CD8-positive, alpha-beta T cell (primary cell): ENCODE measurements at regions of chr1 and their contacts with region 1.

Region 1: GRCh38 chr1:145978854-145979759 is 14.6 kb downstream of the POLR3GL start:
- DNase-seq: peak; percentile 45 to 96 (median 76)
- ATAC-seq: peak; percentile 72
- H3K4me3 ChIP-seq: peak overlapping the region; percentile 17 to 34
- H3K4me3 Mint-ChIP-seq: no peak overlapping the region
- H3K27ac ChIP-seq: peak overlapping the region; percentile 57 to 95
- H3K27ac Mint-ChIP-seq: no peak overlapping the region
- H3K4me1 ChIP-seq: peaks cover 70% of the 10 kb centered on the region
- H3K4me1 Mint-ChIP-seq: peaks cover 23% of the 10 kb centered on the region
- H3K27me3 ChIP-seq: no peaks in the 10 kb centered on the region
- H3K27me3 Mint-ChIP-seq: no peaks in the 10 kb centered on the region
- CTCF ChIP-seq: peak; percentile 27

Region 2: DNA sequence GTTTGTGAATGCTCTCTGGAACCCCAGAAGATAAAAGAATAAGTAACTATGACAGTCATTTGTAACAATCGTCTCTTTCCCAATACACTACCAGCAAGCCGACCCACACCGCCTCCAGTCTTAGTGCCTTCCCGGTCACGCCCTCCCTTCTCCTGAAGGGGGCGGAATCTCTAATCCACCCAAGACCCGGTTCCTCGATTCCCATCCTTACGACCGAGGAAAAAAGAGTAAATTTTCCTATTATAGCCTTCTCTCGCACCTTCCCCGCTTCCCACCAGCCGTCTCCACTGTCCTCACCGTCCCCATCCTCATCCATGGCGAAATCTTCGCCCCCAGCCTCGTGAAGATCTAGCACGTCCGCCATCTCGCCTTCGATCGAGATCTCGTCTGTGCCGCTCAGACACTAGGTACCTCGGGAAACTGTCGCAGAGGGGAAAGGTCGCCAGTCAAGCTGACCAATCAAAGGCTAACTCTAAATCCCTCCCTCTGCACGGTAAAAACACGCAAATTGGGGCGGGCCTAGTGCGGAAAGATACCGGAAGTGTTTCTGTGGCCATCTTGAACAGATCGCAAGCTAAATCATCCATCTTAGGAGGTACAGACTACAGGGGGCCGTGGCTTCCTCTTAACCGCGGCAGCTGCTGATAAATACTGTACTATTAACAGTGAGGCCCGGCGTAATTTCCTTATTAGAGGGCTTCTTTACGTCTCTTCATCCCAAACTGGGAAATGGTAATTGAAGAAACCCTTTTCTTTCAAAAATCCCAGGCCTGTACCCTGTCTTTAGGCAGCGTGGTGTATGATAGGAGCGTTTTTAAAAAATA is 51.8 kb before region 1 on chr1 and contains the start of gene RBM8A:
- CTCF ChIA-PET with region 1: interaction called, 8 read pairs
- POLR2A ChIA-PET with region 1: interaction called, 10 read pairs
- intact Hi-C with region 1: no loop called
- DNase-seq: peak; percentile 85 to 99 (median 94)
- ATAC-seq: peak; percentile 96
- H3K4me3 ChIP-seq: peak within 1 kb of the TSS; percentile 86 to 91
- H3K4me3 Mint-ChIP-seq: no peak within 1 kb of the TSS
- H3K27ac ChIP-seq: peak within 1 kb of the TSS; percentile 89 to 95
- H3K27ac Mint-ChIP-seq: peak within 1 kb of the TSS; percentile 91
- H3K4me1 ChIP-seq: peaks cover 22% of the 10 kb centered on the region
- H3K4me1 Mint-ChIP-seq: peaks cover 20% of the 10 kb centered on the region
- H3K27me3 ChIP-seq: no peaks in the 10 kb centered on the region
- H3K27me3 Mint-ChIP-seq: no peaks in the 10 kb centered on the region
- CTCF ChIP-seq: peak; percentile 60
- total RNA-seq, gene RBM8A: 180 to 187 TPM

Region 3: DNA sequence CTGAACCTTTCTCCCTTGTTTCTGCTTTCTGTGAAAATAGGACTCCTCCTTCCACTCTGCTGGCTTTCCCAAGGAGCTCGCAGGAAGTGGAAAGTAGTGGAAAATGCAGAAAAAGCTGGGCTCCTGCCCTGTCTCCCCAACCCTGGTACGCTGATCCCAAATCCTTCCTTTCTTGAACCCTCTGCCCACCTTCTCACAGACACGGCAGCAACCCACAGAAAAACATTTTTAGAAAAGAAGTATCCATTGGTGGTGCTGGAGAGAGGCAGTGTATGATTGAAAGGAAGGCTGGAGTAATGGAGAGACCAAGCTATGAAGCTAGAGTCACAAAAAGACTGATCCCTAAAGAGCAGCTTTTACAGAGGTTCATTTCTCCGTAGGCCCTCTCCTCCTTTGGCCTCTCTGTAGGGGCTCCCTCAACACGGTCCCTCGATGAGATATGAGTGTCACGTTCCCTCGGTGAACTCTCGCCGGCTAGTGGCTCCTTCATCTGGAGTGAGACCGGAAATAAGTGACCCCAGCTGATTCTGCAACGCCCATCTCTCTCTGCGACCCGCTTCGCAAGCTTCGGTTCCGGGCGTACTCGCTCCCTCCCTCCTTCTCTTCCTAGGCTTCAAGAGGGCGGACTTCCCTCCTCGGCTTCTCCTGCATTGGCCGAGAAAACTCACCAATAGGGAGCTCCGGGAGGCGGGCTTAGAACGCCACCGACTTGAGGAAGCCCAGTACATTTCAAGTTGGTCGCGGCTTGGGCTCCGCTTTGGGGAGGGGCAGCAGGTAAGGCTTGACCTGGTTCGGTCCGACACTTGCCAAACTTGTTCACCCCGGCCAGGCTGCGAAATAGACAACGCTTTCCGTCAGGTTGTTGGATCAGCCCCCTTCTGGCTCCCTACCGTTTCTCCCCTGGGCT is 14.9 kb before region 1 on chr1 and contains the starts of genes ANKRD34A and POLR3GL:
- CTCF ChIA-PET with region 1: interaction called, 86 read pairs
- POLR2A ChIA-PET with region 1: interaction called, 24 read pairs
- intact Hi-C with region 1: loop called (anchors 1 to 2 kb)
- DNase-seq: peak; percentile 77 to 95 (median 91)
- ATAC-seq: peak; percentile 88
- H3K4me3 ChIP-seq: peak within 1 kb of the TSS; percentile 87 to 92
- H3K4me3 Mint-ChIP-seq: peak within 1 kb of the TSS; percentile 98
- H3K27ac ChIP-seq: peak within 1 kb of the TSS; percentile 71 to 78
- H3K27ac Mint-ChIP-seq: peak within 1 kb of the TSS; percentile 98
- H3K4me1 ChIP-seq: peaks cover 32% of the 10 kb centered on the region
- H3K4me1 Mint-ChIP-seq: peaks cover 58% of the 10 kb centered on the region
- H3K27me3 ChIP-seq: no peaks in the 10 kb centered on the region
- H3K27me3 Mint-ChIP-seq: no peaks in the 10 kb centered on the region
- CTCF ChIP-seq: no peak
- total RNA-seq, gene ANKRD34A: 0.42 to 0.62 TPM
- total RNA-seq, gene POLR3GL: 12.9 to 14.4 TPM

Region 4: GRCh38 chr1:146007506-146008133 is 28.5 kb after region 1 on chr1:
- CTCF ChIA-PET with region 1: interaction called, 386 read pairs
- POLR2A ChIA-PET with region 1: interaction called, 27 read pairs
- intact Hi-C with region 1: loop called (anchors 1 kb)
- DNase-seq: peak in 1 of 9 experiments; percentile 39
- ATAC-seq: no peak
- H3K4me3 ChIP-seq: no peak overlapping the region
- H3K4me3 Mint-ChIP-seq: peak overlapping the region; percentile 82
- H3K27ac ChIP-seq: peak overlapping the region; percentile 46 to 59
- H3K27ac Mint-ChIP-seq: peak overlapping the region; percentile 92
- H3K4me1 ChIP-seq: peaks cover 27% of the 10 kb centered on the region
- H3K4me1 Mint-ChIP-seq: peaks cover 34% of the 10 kb centered on the region
- H3K27me3 ChIP-seq: no peaks in the 10 kb centered on the region
- H3K27me3 Mint-ChIP-seq: no peaks in the 10 kb centered on the region
- CTCF ChIP-seq: no peak

Region 5: GRCh38 chr1:146019231-146020057 is 40.3 kb after region 1 on chr1:
- CTCF ChIA-PET with region 1: interaction called, 386 read pairs
- POLR2A ChIA-PET with region 1: interaction called, 4 read pairs
- intact Hi-C with region 1: no loop called
- DNase-seq: peak in 1 of 9 experiments; percentile 45
- ATAC-seq: peak; percentile 20
- H3K4me3 ChIP-seq: no peak overlapping the region
- H3K4me3 Mint-ChIP-seq: peak overlapping the region; percentile 37
- H3K27ac ChIP-seq: no peak overlapping the region
- H3K27ac Mint-ChIP-seq: no peak overlapping the region
- H3K4me1 ChIP-seq: no peaks in the 10 kb centered on the region
- H3K4me1 Mint-ChIP-seq: peaks cover 9% of the 10 kb centered on the region
- H3K27me3 ChIP-seq: peaks cover 10 to 14% of the 10 kb centered on the region in 2 experiments
- H3K27me3 Mint-ChIP-seq: peaks cover 38% of the 10 kb centered on the region
- CTCF ChIP-seq: no peak

Region 6: DNA sequence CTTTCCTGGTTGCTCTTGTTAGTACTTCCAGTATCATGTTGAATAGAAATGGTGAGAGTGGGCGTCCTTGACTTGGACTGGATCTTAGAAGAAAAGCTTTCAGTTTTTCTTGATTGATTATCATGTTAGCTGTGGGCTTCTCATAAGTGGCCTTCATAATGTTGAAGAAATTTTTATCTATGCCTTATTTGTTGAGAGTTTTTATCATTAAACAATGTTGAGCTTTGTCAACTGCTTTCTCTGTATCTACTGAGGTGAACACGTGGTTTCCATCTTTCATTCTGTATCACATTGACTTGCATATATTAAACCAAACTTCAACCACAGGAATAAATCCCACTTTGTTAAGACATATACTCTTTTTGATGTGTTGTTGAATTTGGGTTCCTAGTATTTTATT is 1163.8 kb after region 1 on chr1:
- CTCF ChIA-PET with region 1: no interaction called
- POLR2A ChIA-PET with region 1: no interaction called
- intact Hi-C with region 1: no loop called
- DNase-seq: no peak
- ATAC-seq: no peak
- H3K4me3 ChIP-seq: no peak overlapping the region
- H3K4me3 Mint-ChIP-seq: no peak overlapping the region
- H3K27ac ChIP-seq: no peak overlapping the region
- H3K27ac Mint-ChIP-seq: no peak overlapping the region
- H3K4me1 ChIP-seq: no peaks in the 10 kb centered on the region
- H3K4me1 Mint-ChIP-seq: no peaks in the 10 kb centered on the region
- H3K27me3 ChIP-seq: peaks cover 3% of the 10 kb centered on the region in 2 experiments
- H3K27me3 Mint-ChIP-seq: peaks cover 30% of the 10 kb centered on the region
- CTCF ChIP-seq: no peak